ENCODE measurements at regions of chr10 and their contacts with region 1.

Region 1: DNA sequence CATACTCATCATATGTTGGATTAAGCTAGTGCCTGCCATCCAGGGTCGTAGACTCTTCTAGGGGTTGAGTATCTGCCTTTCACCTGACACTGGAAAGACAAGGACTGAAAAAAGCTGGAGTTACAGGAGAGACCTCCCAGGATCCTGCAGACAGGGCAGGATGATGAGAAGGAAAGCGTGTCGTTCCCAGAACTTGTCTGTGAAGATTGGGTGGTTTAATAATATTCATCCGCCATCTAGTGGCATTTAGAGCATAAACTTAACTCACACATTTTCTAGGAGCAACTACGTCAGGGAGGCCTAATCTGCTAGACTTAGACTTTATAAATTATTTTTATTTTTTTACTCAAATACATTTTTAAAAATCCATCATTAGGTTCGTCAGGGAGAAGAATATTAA is 59.6 kb downstream of the ADRB1 start:
- DNase-seq: peak; percentile 46
- H3K4me3 ChIP-seq: no peak overlapping the region
- H3K27ac ChIP-seq: no peak overlapping the region
- H3K4me1 ChIP-seq: peaks cover 5% of the 10 kb centered on the region
- H3K27me3 ChIP-seq: peaks cover 5% of the 10 kb centered on the region
- CTCF ChIP-seq: peak; percentile 53 to 56

Region 2: DNA sequence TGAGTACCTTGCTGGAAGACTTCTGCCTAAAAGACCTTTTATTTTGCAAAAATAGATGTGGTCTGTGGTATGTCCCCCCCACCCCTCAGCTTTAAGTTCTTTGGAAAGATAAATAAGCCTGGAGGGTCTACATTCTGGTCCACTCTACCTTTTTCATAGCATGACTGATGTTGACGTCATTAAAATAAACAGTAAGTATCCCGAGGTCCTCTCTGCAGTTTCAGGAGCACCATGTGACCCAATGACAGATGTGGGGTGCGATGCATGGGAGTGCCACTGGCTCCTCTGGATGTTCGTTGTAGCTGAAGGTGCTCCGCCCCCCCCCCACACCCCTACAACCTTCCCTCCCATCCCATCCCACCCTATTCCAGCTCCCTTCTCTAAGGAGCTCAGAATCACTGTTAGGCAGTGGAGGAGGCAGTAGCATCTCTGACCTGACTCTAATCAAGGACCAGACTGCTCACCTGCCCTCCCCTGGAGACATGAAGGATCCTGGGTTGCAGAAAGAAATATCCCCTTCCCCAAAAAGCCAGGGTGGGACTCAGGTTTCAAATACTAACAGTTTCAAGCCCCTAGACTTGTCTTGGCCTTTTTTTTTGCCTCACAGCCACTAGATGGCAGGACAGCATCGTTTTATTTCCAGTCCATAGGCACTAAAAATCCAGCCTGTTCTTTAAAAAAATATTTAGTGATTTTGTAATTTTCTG is 398.5 kb before region 1 on chr10:
- CTCF ChIA-PET with region 1: no interaction called
- dilution Hi-C with region 1: no loop called
- in situ Hi-C with region 1: loop called in 1 of 2 experiments (anchors 10 kb)
- intact Hi-C with region 1: loop called (anchors 1 kb)
- DNase-seq: peak; percentile 4
- H3K4me3 ChIP-seq: no peak overlapping the region
- H3K27ac ChIP-seq: no peak overlapping the region
- H3K4me1 ChIP-seq: peaks cover 4% of the 10 kb centered on the region
- H3K27me3 ChIP-seq: no peaks in the 10 kb centered on the region
- CTCF ChIP-seq: peak; percentile 64 to 67

Region 3: DNA sequence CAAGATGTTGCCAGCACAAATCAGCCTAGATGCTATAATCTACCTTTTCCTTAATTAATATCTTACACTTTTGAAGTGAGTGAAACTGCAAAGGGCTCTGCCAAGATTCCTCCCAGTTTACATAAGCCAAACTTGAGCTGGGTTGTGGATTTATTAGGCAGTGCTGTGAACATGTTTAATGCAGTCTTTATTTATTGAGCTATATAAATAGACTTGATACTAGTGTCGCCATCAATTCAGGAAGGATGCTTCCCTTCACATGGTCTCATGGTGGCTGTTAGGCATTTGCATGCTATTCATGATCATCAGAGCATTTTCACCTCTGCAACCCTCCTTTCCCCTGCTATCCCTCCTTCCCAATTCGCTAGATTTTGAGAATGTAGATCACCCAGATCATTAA is 311.6 kb before region 1 on chr10:
- CTCF ChIA-PET with region 1: interaction called, 4 read pairs
- dilution Hi-C with region 1: no loop called
- in situ Hi-C with region 1: loop called (anchors 5 kb)
- intact Hi-C with region 1: no loop called
- DNase-seq: no peak
- H3K4me3 ChIP-seq: no peak overlapping the region
- H3K27ac ChIP-seq: no peak overlapping the region
- H3K4me1 ChIP-seq: peaks cover 12% of the 10 kb centered on the region
- H3K27me3 ChIP-seq: peaks cover 7% of the 10 kb centered on the region
- CTCF ChIP-seq: no peak

Region 4: DNA sequence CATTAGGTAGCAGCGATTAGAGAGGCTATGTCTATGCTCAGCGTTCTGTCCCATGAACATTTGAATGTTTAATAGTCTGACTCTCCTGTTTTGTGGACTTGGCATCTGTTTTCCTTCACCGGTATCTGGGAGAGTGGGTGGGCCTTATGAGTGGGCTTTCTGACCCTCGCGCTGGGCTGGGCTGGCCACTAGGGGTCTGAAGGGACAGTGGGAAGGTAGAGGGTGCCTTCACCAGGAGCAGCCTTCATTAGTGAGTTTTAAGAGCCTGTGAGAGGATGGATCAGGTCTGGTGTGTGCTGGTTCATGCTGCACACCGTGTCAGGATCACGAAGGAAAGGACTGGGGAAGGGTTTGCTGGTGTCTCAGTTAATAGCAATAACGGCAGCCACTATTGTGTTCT is 282.8 kb before region 1 on chr10:
- CTCF ChIA-PET with region 1: no interaction called
- dilution Hi-C with region 1: loop called (anchors 25 kb)
- in situ Hi-C with region 1: no loop called
- intact Hi-C with region 1: no loop called
- DNase-seq: no peak
- H3K4me3 ChIP-seq: no peak overlapping the region
- H3K27ac ChIP-seq: no peak overlapping the region
- H3K4me1 ChIP-seq: no peaks in the 10 kb centered on the region
- H3K27me3 ChIP-seq: peaks cover 3% of the 10 kb centered on the region
- CTCF ChIP-seq: peak in 1 of 2 donors; percentile 2

Region 5: GRCh38 chr10:113891476-113891875 is 211.8 kb before region 1 on chr10:
- CTCF ChIA-PET with region 1: no interaction called
- dilution Hi-C with region 1: no loop called
- in situ Hi-C with region 1: no loop called
- intact Hi-C with region 1: loop called (anchors 5 kb)
- DNase-seq: no peak
- H3K4me3 ChIP-seq: no peak overlapping the region
- H3K27ac ChIP-seq: no peak overlapping the region
- H3K4me1 ChIP-seq: peaks cover 10% of the 10 kb centered on the region
- H3K27me3 ChIP-seq: no peaks in the 10 kb centered on the region
- CTCF ChIP-seq: no peak

Region 6: DNA sequence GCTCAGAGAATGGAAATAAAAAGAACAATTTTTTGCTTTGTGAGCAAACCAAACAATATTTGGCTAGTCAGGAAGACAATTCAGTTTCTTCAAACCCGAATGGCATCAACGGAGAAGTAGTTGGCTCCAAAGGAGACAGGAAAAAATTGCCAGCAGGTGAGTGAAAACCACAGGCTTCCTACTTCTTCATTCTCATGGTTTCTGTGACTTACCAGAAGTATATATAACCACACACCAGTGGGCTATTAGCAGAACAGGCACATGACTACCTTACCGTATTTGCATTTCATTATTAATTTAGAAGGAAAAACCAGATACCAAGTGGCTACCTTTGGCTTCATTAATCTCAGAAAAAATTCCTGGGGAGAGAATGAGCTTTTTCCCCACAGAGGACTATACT is 84.7 kb after region 1 on chr10:
- CTCF ChIA-PET with region 1: no interaction called
- dilution Hi-C with region 1: loop called (anchors 5 kb)
- in situ Hi-C with region 1: no loop called
- intact Hi-C with region 1: no loop called
- DNase-seq: no peak
- H3K4me3 ChIP-seq: no peak overlapping the region
- H3K27ac ChIP-seq: no peak overlapping the region
- H3K4me1 ChIP-seq: no peaks in the 10 kb centered on the region
- H3K27me3 ChIP-seq: peaks cover 3% of the 10 kb centered on the region
- CTCF ChIP-seq: no peak